Right ventricle myocardium inferior (tissue), 1 donor: ENCODE measurements at regions of chr5 and their contacts with region 1.

Region 1: GRCh38 chr5:113204525-113205161 is 228.0 kb downstream of the DCP2 start:
- DNase-seq: peak; percentile 74
- ATAC-seq: peak; percentile 71

Region 2: DNA sequence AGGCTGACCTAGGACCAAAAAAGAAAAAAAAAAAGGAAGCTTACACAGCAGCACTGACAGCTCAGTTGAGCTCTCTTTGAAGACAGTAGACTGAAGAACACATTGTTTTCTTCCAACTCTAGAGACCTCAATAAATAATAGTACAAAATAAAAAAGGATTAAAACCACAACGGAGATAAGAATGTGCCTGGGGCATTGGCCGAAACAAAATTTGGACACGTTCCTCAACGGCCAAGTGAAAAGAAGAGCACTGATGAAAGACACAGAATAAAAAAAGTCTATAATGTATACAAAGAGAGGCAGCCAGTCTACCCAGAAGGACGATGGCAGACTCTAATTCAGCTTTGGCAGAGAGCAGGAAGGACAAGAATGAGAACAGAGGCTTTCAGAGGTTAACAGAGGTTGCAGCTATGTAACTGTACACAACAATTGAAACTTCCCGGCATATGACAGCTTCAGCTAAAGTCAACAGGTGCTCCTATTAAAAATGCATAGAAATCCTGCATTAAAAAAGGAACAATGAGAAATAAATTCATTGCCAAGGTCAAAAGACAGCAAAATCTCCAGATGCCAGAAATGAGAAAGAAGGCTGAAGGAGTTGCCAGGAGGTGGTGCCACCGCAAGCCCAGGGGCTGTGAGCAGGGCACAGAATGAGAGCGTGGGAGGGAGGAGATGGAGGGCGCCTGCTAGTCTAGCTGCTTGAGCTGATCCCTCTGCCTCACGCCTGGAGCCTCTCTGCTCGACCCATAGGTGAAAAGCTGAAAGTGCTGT is 114.1 kb before region 1 on chr5:
- intact Hi-C with region 1: loop called (anchors 2 kb)
- DNase-seq: no peak
- ATAC-seq: peak; percentile 62

Region 3: DNA sequence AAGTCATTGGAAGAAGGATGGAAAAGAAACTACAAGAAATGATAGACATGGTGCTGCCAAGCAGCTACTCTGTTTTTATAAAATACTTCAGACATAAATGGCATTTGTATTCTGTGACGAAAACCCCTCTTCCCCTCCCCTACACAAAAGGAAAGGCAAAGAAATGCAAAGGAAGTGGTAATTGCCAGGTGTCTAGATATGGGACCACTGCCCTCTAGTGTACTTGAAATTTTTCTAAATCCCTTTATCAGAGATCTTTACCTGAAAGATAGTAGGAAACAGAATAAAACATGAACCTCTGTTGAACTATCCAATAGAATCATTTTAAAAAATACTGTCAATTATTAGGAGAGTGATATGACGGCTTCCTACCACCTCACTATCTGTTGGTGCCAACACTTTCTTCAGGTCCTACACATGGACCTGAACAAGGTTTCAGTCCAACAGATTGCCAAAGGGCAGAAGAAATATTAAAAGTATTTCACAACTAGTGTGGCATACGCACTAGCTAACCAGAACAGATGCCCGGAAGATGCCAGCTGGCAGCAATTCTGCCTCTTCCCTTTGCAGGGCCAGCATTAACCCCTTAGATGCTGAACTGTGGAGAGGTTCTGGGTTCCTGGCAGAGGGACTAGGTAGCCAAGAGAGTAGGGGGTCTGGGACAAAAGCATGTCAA is 126.0 kb after region 1 on chr5:
- intact Hi-C with region 1: loop called (anchors 5 kb)
- DNase-seq: peak; percentile 73
- ATAC-seq: peak; percentile 69